Breast epithelium (tissue), 4 donors: ENCODE measurements at regions of chr1 and their contacts with region 1.

Region 1: GRCh38 chr1:167721617-167722151 is at the start of gene MPZL1:
- DNase-seq: peak; percentile 93 to 96
- H3K4me3 ChIP-seq: peak within 1 kb of the TSS; percentile 83 to 100 (median 96)
- H3K27ac ChIP-seq: peak within 1 kb of the TSS; percentile 92 to 93
- H3K4me1 ChIP-seq: peaks cover 0 to 17% of the 10 kb centered on the region in 2 donors
- H3K27me3 ChIP-seq: no peaks in the 10 kb centered on the region
- CTCF ChIP-seq: no peak
- POLR2A ChIP-seq: peak; percentile 64
- total RNA-seq, gene MPZL1: 43.5 to 86.8 (median 86.2) TPM

Region 2: GRCh38 chr1:167697667-167698141 is 24.0 kb before region 1 on chr1:
- intact Hi-C with region 1: loop called (anchors 2 kb)
- DNase-seq: peak; percentile 55 to 80
- H3K4me3 ChIP-seq: no peak overlapping the region
- H3K27ac ChIP-seq: peak overlapping the region; percentile 25 to 40
- H3K4me1 ChIP-seq: peaks cover 0 to 7% of the 10 kb centered on the region in 2 donors
- H3K27me3 ChIP-seq: no peaks in the 10 kb centered on the region
- CTCF ChIP-seq: no peak
- POLR2A ChIP-seq: no peak

Region 3: DNA sequence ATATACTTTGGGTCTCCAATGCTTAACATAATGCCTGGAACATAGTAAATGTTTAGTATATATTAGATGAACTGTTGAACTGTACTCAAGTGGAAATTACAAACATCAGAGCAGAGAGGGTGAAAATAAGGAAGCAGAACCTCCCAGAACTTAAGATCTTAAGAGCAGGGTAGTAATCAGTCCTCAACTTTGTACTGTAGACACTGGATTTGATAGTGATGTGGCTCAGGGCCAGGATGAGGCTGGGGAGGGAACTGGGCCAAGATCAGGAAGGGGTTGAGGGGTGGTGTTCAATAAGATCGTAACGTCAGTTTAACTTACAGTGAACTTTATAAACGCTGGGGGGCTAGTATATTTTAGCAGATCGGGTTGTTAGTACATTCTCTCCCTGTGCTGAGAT is 15.5 kb after region 1 on chr1:
- intact Hi-C with region 1: no loop called
- DNase-seq: no peak
- H3K4me3 ChIP-seq: no peak overlapping the region
- H3K27ac ChIP-seq: no peak overlapping the region
- H3K4me1 ChIP-seq: no peaks in the 10 kb centered on the region
- H3K27me3 ChIP-seq: no peaks in the 10 kb centered on the region
- CTCF ChIP-seq: no peak
- POLR2A ChIP-seq: no peak

Region 4: DNA sequence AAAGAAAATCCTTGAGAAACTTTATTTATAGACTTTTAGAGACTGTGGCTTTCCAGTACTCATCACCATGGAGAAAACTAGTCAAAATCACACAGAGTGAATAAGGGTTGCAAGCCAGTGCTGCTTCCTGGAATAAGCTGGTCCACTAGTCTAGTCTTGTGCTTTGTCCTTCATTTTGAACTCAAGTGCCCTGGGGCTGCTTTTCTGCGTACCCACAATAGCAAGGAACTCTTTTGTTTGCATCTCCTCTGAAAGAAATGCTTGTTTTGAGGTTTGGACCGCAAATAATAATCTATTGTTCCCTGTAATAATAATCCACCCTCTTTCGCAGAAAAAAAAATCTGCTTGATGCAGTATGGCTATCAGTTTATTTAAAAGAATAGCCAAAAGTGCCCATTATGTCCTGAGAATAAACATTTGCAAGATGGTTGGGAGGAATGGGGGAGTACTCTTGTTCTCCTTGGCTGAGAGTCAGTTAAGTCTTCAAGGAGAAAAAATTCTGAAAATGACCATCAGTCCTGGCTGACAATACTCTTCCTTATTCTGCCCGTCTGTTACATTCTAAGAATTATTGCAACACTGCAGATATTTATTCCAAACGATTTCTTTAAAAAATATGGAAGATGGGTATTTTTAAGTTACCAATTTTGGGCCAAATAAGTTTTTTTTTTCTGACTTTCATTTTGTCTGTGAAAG is 42.0 kb after region 1 on chr1:
- intact Hi-C with region 1: no loop called
- DNase-seq: peak; percentile 52 to 93
- H3K4me3 ChIP-seq: peak overlapping the region in 1 of 3 donors; percentile 2
- H3K27ac ChIP-seq: peak overlapping the region in 1 of 2 donors; percentile 60
- H3K4me1 ChIP-seq: peaks cover 7 to 8% of the 10 kb centered on the region in 2 donors
- H3K27me3 ChIP-seq: no peaks in the 10 kb centered on the region
- CTCF ChIP-seq: no peak
- POLR2A ChIP-seq: no peak

Region 5: DNA sequence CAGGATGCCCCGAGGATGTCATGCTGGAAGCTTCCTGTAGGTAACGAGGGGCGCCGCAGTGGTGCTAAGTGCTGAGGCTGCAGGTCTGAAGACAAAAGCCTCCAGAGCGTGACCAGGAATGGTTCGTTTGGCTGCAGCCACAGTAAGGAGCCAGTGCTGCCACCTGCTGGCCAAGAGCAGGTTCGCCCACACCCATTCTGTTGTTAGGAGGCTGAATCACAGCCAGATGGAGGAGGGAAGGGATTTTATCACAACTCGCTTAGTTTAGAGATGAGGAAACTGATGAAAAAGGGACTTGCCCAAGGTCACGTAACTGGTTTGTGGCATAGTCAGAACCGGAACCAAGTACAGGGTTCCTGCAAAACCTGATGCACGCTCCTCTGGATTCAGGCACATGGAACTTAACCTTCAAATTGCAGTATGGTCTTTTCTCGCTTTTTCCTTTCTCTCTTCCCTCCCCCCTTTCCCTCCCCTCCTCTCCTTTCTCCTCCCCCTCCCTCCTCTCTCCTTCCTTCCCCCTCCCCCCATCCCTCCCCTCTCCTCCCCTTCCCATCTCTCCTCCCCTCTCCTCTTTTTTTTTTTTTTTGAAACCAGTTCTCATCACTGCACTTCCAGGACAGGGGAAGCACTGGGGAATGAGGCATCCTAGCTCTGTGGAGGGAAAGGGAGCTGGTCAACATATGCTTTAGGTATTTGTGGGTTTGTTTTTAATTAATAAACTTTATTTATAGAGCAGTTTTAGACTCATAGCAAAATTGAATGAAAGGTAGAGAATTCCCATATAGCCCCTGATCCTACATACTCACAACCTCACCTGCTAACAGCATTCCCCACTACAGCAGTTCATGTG is 81.9 kb after region 1 on chr1:
- intact Hi-C with region 1: loop called (anchors 10 kb)
- DNase-seq: peak; percentile 85 to 90
- H3K4me3 ChIP-seq: no peak overlapping the region
- H3K27ac ChIP-seq: no peak overlapping the region
- H3K4me1 ChIP-seq: peaks cover 0 to 4% of the 10 kb centered on the region in 2 donors
- H3K27me3 ChIP-seq: no peaks in the 10 kb centered on the region
- CTCF ChIP-seq: peak; percentile 91 to 95 (median 95)
- POLR2A ChIP-seq: no peak